Activated naive CD4-positive, alpha-beta T cell treated with anti-CD3 and anti-CD28 coated beads for 36 hours (primary cell): ENCODE measurements at regions of chr11 and their contacts with region 1.

Region 1: DNA sequence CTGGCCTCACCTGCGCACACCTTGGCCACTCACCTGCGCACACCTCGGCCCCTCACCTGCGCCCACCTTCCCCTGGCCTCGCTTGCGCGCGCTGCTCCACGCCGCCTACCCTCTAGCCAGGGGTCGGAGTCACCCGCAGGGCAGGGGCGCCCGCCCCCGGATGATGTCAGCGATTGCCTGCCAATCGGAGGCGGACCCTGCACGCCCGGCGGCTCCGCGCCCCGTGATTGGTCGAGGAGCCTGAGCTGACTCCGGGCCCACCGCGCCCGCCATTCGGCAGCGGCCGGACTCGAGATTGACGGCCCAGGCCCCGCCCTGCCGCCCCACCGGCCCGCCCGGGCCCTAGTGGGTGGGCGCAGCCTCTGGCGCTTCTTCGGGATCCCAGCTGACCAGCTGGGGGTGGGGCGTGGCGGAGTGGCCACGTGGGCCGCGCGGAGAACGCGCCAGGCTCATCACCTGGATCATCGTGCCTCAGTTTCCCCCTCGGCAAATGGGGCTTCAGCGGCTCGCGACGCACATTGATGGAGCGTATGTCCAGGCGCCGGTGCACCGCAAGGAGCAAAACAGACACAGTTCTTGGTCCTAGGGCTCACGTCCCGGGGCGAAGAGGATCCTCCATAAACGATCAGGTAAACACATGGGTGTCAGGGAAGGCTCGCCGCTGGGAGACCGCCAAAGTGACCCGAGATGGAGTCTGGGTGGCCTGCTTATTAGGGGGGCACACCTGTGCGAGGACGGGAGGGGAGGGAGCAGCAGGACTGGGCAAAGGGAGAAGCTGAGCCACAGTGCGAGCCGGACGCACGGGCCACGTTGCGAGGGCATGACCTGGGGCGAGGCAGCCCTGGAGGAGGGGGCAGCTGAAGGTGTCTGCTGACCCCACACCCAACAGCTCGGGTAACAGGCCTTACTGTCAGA is at the start of gene DHCR7:
- DNase-seq: peak; percentile 93
- H3K4me3 Mint-ChIP-seq: peak within 1 kb of the TSS; percentile 91
- H3K27ac Mint-ChIP-seq: peak within 1 kb of the TSS; percentile 86
- H3K4me1 Mint-ChIP-seq: peaks cover 40% of the 10 kb centered on the region
- H3K27me3 Mint-ChIP-seq: no peaks in the 10 kb centered on the region
- total RNA-seq, gene DHCR7: 52.0 to 58.7 TPM

Region 2: DNA sequence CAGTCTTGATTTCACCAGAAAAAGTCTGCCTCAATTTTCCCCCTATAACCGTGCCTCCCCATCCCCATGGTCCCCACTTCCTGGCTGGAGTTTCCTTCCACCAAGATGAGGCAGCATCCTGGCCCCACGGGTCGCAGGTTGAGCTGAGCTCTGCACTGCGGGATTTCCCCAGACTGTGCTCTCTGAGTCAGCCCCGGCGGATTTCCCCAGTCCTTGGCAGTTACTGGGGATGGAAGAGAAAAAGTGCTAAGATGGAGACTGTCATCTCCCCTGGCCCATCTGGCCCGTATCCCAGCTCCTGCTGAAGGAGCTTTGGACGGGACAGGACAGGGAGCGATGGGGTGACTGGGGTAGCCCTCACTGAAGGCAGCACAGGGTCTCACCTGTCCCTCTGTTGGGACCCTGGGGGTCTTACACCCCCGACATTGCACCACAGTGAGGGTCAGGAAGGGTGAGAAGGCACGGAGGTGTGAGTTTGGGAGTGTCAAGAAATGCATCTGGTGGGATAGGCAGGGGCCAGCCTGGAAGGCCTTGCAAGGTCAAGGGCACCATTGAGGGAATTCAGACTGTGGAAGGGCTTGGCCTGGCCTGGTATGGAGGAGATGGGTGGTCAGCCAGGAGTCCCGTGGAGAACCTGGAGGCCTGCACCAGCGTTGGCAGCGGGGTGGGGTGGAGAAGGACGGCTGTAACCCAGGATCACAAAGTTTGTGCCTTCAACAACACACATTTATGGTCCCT is 41.0 kb after region 1 on chr11:
- CTCF ChIA-PET with region 1: no interaction called
- intact Hi-C with region 1: loop called (anchors 2 kb)
- DNase-seq: peak; percentile 92
- H3K4me3 Mint-ChIP-seq: no peak overlapping the region
- H3K27ac Mint-ChIP-seq: peak overlapping the region; percentile 69
- H3K4me1 Mint-ChIP-seq: peaks cover 23% of the 10 kb centered on the region
- H3K27me3 Mint-ChIP-seq: no peaks in the 10 kb centered on the region

Region 3: GRCh38 chr11:71563401-71563800 is 114.9 kb after region 1 on chr11:
- CTCF ChIA-PET with region 1: no interaction called
- intact Hi-C with region 1: loop called (anchors 5 kb)
- DNase-seq: peak; percentile 55
- H3K4me3 Mint-ChIP-seq: no peak overlapping the region
- H3K27ac Mint-ChIP-seq: no peak overlapping the region
- H3K4me1 Mint-ChIP-seq: no peaks in the 10 kb centered on the region
- H3K27me3 Mint-ChIP-seq: peaks cover 23% of the 10 kb centered on the region

Region 4: DNA sequence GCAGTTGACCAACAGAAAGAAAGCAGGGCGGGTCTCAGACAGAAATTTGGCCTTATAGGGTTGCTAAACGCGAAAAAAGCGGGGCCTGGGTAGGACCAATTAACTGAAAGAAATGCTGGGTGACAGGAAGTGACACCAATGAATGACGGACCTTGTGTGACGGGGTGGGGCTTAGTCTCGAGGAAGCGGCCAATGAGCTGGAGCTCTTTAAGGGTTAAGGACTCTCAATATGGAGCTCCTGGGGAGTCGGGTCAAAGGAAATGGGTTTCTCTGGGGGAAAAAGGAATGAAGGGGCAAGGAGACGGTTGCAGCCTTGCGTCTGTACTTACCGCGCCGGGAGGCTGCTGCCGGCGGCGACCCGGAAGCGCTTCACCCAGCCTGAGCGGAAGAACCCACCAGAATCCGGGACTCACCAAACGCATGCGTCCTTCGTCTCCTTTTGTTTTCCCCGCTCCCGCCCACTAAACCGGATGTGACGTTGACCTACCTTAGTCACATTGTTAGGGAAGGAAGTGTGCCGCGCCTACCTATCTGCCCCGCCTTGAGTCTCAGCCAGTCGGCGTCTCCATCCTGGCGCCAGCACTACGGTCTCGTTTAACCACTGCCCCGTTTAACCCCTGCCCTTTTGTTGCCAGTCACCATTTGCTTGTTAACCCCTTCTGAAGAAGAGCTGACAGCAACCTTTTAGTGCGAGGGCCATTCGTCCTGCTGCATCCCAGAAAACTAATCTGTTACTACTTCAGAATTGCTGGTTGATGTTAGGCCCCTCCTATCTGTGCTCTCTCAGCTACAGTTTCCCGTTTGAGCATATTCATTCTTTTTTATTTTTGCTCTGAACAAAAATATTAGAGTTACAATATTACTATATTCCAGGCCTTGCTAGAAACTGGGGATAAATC is 664.1 kb after region 1 on chr11 and contains the start of gene ANAPC15:
- CTCF ChIA-PET with region 1: no interaction called
- intact Hi-C with region 1: loop called (anchors 1 kb)
- DNase-seq: peak; percentile 100
- H3K4me3 Mint-ChIP-seq: peak within 1 kb of the TSS; percentile 85
- H3K27ac Mint-ChIP-seq: peak within 1 kb of the TSS; percentile 97
- H3K4me1 Mint-ChIP-seq: peaks cover 12% of the 10 kb centered on the region
- H3K27me3 Mint-ChIP-seq: no peaks in the 10 kb centered on the region
- total RNA-seq, gene ANAPC15: 69.1 to 70.3 TPM